ENCODE measurements at regions of chr10 and their contacts with region 1.

Region 1: DNA sequence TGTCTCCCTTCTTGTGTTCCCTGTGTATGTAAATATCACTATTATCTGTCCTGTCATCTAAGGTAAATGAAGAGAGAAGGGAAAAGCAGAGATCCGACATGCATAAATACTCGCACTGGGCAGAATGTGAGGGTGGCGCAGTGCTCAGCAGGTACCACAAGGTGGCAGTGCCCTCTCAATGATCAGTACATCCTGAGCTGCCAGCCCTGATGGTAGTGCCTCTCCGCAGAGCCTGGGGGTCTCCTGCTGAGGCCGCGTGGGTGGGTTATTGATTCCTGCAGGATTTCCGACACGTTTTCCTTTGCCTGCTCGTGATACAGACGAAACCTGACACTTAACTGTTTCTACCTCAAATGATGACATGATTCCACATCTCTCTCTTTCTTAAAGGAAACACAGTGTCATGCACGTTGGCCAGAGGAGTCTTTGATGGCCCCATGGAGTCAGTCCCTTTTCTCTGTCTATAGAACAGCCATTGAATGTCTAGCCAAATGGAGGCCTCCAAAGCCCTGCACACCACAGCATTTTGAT is 19.8 kb downstream of the RGR start:
- DNase-seq: peak; percentile 83
- ATAC-seq: peak; percentile 91

Region 2: GRCh38 chr10:83603708-83604107 is 661.0 kb before region 1 on chr10:
- intact Hi-C with region 1: no loop called
- DNase-seq: no peak
- ATAC-seq: no peak

Region 3: DNA sequence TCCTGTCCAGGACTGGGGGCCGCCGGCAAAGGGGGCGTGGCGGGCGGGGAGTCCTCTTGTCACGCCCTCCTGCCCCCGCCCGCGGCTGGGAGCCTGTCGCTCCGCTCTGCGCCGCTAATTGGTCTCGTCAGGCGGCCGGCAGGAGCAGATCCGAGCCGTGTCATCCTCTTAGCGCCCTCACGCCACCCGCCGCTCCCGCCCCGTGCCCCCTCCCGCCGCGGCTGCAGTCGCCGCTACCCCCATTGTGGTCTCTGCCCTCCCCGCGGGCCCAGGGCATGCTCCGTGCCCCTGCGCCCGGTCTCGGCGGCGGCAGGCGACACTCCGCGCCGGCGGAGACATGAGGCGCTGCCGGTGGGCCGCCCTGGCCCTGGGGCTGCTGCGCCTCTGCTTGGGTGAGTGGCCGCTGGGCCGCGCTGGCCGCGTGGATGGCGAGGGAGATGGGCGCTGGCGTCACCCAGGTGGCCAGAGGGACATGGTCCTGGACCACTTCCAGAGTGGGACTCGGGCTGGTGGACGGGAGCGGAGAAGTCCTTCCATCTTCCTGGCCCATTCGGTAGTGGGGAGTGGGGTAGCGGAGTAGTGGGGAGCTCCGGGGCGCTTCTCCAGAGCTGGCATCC is 70.1 kb before region 1 on chr10 and contains the start of gene CDHR1:
- intact Hi-C with region 1: no loop called
- DNase-seq: no peak
- ATAC-seq: peak; percentile 60
- total RNA-seq, gene CDHR1: 2.0 TPM

Region 4: DNA sequence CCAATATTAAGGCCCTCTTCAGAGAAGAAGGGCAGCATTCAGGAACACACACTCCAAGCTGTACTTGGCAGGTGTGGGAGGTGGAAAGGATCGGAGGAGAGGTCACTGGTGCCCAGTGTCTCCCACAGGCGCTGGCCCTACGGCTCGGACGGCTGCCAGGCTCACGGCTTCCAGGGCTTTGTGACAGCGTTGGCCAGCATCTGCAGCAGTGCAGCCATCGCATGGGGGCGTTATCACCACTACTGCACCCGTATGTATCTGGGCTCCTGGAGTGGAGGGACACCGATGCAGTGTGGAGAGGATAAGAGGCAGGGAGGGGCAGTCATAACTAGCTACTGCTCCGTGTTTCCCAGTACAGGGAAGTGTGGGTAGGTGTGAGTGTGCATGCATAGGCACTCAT is 15.9 kb before region 1 on chr10:
- intact Hi-C with region 1: no loop called
- DNase-seq: no peak
- ATAC-seq: no peak

Region 5: GRCh38 chr10:84375011-84375410 is 110.3 kb after region 1 on chr10:
- intact Hi-C with region 1: loop called (anchors 10 kb)
- DNase-seq: no peak
- ATAC-seq: no peak

Region 6: GRCh38 chr10:84397735-84398144 is 133.1 kb after region 1 on chr10:
- intact Hi-C with region 1: no loop called
- DNase-seq: no peak
- ATAC-seq: no peak